Activated CD4-positive, alpha-beta T cell treated with anti-CD3 and anti-CD28 coated beads for 36 hours (primary cell): ENCODE measurements at regions of chr17 and their contacts with region 1.

Region 1: DNA sequence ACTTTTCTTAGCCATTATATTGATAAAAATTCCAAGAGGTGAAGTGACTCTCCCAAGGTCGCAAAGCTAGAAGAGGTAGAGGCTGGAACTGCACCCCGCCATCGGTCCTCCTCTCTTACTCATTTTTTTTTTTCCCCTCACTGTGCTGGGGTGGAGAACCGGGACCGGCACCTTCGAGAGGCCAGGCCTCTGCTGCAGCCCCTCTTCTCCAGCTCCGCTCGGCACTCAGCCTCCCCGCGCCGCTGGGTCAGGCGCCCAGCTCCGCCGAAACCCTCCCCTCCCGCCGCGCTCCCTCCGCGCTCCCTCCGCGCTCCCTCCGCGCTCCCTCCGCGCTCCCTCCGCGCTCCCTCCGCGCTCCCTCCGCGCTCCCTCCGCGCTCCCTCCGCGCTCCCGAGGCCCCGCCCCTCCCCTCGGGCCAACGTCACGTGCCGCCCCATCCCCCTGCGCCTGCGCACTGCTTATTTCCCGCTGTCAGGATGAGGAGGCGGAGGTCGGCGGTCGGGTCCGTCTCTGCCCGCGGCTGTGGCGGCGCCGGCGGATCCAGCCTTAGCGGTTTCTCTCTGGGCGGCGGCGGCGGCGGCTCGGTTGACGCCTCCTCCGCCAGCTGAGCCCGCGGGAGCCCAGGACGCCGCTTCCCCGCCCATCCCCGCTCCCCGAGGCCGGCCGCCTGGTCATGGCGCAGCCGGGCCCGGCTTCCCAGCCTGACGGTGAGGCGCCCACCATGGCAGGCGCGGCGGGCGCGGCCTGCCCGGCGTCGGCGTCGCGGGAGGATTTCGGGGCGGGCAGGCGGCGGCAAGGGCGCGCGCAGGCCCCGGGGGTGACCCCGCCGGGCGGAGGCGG is at the start of gene RABEP1:
- DNase-seq: peak; percentile 97
- ATAC-seq: peak; percentile 81
- H3K4me3 Mint-ChIP-seq: peak within 1 kb of the TSS; percentile 86
- H3K27ac Mint-ChIP-seq: peak within 1 kb of the TSS; percentile 90
- H3K4me1 Mint-ChIP-seq: peaks cover 32% of the 10 kb centered on the region
- H3K27me3 Mint-ChIP-seq: no peaks in the 10 kb centered on the region
- total RNA-seq, gene RABEP1: 60.4 to 66.2 TPM

Region 2: GRCh38 chr17:5237541-5238016 is 44.5 kb before region 1 on chr17:
- CTCF ChIA-PET with region 1: interaction called, 3 read pairs
- POLR2A ChIA-PET with region 1: no interaction called
- intact Hi-C with region 1: loop called in 1 of 2 experiments (anchors 5 kb)
- DNase-seq: peak; percentile 70
- ATAC-seq: peak; percentile 69
- H3K4me3 Mint-ChIP-seq: no peak overlapping the region
- H3K27ac Mint-ChIP-seq: no peak overlapping the region
- H3K4me1 Mint-ChIP-seq: peaks cover 24% of the 10 kb centered on the region
- H3K27me3 Mint-ChIP-seq: no peaks in the 10 kb centered on the region

Region 3: GRCh38 chr17:5468075-5468473 is 186.0 kb after region 1 on chr17:
- CTCF ChIA-PET with region 1: no interaction called
- POLR2A ChIA-PET with region 1: no interaction called
- intact Hi-C with region 1: loop called in 1 of 2 experiments (anchors 5 kb)
- DNase-seq: peak; percentile 35
- ATAC-seq: peak; percentile 14
- H3K4me3 Mint-ChIP-seq: peak overlapping the region; percentile 90
- H3K27ac Mint-ChIP-seq: peak overlapping the region; percentile 75
- H3K4me1 Mint-ChIP-seq: peaks cover 38% of the 10 kb centered on the region
- H3K27me3 Mint-ChIP-seq: no peaks in the 10 kb centered on the region

Region 4: DNA sequence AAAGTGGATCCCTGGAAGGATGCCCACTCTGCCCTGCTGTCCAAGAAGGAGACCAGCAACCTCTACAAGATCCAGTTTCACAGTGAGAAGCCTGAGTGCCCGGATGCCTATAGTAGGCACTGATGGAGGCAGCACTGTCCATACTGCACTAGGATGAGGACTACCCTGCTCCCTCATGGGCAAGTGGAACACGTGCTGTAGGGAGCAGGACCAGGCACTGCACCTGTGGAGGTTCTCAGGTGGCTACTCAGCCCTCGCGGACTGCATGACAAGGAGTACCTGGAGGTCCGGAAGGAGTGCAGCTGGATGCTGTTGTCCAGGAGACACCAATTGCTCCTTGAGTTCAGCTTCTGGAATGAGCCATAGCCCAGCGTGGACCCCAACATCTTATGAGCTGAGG is 448.3 kb after region 1 on chr17:
- CTCF ChIA-PET with region 1: no interaction called
- POLR2A ChIA-PET with region 1: no interaction called
- intact Hi-C with region 1: no loop called
- DNase-seq: no peak
- ATAC-seq: no peak
- H3K4me3 Mint-ChIP-seq: no peak overlapping the region
- H3K27ac Mint-ChIP-seq: no peak overlapping the region
- H3K4me1 Mint-ChIP-seq: no peaks in the 10 kb centered on the region
- H3K27me3 Mint-ChIP-seq: peaks cover 17% of the 10 kb centered on the region